Dendritic cell treated with granulocyte-macrophage colony-stimulating factor and Interleukin-4, amounts not matched to agents 40 ng/mL and 50 ng/mL, for 4 days (primary cell): ENCODE measurements at regions of chr14 and their contacts with region 1.

Region 1: GRCh38 chr14:31926123-31926522 is 151.0 kb upstream of the ARHGAP5 start:
- H3K4me3 Mint-ChIP-seq: no peak overlapping the region
- H3K27ac Mint-ChIP-seq: no peak overlapping the region
- H3K4me1 Mint-ChIP-seq: no peaks in the 10 kb centered on the region
- H3K27me3 Mint-ChIP-seq: peaks cover 3% of the 10 kb centered on the region

Region 2: GRCh38 chr14:30840086-30840779 is 1085.9 kb before region 1 on chr14:
- intact Hi-C with region 1: no loop called
- H3K4me3 Mint-ChIP-seq: no peak overlapping the region
- H3K27ac Mint-ChIP-seq: no peak overlapping the region
- H3K4me1 Mint-ChIP-seq: peaks cover 3% of the 10 kb centered on the region
- H3K27me3 Mint-ChIP-seq: no peaks in the 10 kb centered on the region

Region 3: GRCh38 chr14:31510222-31510621 is 415.9 kb before region 1 on chr14:
- intact Hi-C with region 1: loop called (anchors 10 kb)
- H3K4me3 Mint-ChIP-seq: no peak overlapping the region
- H3K27ac Mint-ChIP-seq: no peak overlapping the region
- H3K4me1 Mint-ChIP-seq: no peaks in the 10 kb centered on the region
- H3K27me3 Mint-ChIP-seq: peaks cover 12% of the 10 kb centered on the region

Region 4: GRCh38 chr14:32049361-32050088 is 123.4 kb after region 1 on chr14:
- intact Hi-C with region 1: loop called (anchors 10 kb)
- H3K4me3 Mint-ChIP-seq: no peak overlapping the region
- H3K27ac Mint-ChIP-seq: peak overlapping the region; percentile 3
- H3K4me1 Mint-ChIP-seq: peaks cover 15% of the 10 kb centered on the region
- H3K27me3 Mint-ChIP-seq: peaks cover 37% of the 10 kb centered on the region

Region 5: DNA sequence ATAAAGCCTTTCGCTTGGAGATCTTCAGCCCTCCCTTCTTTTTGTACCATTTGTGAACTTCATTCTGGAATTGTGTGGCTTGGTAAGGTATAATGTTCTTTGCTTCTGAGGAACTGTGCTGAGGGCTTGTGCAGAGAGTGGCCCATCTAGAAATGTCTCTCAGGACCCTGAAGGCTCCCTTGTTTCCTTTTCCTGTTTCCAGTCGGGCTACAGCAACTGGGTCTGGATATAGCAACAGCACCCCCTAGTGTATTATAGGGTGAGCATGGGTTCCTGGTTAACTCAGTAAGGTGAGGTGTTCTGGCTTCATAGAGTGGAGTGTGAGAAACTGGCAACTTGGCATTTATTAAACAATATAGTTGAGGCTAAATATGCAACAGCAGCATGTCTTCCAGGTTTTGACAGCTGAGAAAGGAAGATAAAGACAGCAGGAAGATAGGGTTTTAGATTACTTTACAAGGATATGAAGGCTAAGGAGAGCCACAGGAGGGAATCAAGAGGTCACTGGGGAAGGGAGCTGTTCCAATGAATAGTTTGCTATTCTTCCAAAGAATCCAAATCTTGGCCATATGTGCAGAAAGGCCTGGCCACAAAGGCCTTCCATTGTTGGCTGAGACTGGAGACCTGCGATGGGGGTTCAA is 326.0 kb after region 1 on chr14:
- intact Hi-C with region 1: loop called (anchors 1 kb)
- H3K4me3 Mint-ChIP-seq: no peak overlapping the region
- H3K27ac Mint-ChIP-seq: no peak overlapping the region
- H3K4me1 Mint-ChIP-seq: no peaks in the 10 kb centered on the region
- H3K27me3 Mint-ChIP-seq: peaks cover 3% of the 10 kb centered on the region